SK-MEL-5 (cell line): ENCODE measurements at regions of chr18 and their contacts with region 1.

Region 1: DNA sequence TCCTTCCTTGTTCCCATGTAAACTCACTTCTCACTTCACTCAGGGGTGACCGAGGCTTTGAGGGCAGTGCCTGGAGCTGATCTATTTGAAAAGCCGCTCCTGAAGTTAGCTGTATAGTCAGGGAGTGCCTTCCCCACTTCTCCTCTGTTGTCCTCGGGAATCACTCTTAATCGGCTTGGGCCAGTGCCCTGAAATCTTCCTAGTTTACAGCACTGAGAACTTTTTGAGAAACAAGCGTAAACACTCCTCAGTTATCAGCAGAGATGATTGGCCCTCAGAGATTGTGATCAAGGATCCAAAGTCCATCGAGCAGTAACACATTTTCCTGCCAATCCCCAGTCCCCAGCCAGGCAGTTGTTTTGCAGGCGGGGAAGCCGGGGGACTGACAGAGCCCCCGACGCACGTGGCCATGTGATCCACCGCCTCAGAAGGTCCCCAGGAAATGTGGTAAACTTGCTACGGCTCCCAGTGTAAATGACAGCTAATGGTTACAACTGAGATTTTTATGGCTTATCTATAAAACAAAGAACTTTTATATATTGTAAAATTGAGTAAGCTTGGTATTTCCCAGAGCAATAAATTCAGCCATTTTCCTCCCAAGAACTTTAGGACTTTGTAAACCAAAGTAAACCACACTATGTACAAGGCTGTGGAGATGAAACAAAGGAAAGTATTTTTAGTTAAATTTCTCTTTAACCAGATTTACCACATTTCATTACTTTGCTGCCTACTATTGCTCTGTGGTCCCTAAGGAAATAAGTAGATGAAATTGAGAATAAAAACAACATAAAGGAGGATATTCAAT is 53.5 kb downstream of the C18orf63 start:
- DNase-seq: peak; percentile 46

Region 2: GRCh38 chr18:74459889-74460288 is 90.8 kb after region 1 on chr18:
- in situ Hi-C with region 1: loop called (anchors 10 kb)
- DNase-seq: peak; percentile 77

Region 3: DNA sequence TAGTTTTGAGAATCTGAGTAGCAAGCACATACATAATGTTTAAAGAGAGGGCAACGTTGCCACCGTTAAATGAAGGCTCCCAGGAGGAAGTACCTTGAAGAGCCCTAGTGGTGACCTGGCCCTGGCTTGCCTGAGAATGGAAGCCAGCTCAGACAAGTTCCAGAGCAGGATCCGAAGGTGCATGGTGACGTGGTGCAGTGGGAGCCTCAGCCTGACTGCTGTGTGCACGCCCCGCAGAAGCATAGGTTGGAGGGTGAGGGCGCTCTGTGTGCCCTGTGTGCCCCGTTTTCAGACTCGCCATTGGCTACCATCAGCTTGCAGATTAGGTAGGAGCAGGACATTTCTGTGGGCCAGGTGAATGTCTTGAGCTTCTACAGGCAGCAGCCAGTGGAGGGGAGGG is 296.8 kb after region 1 on chr18:
- in situ Hi-C with region 1: no loop called
- DNase-seq: no peak